IMR-90 (cell line): ENCODE measurements at regions of chr1 and their contacts with region 1.

Region 1: GRCh38 chr1:3069491-3070303 is 694 bp downstream of the PRDM16 start:
- DNase-seq: peak; percentile 19
- ATAC-seq: peak; percentile 77
- H3K4me3 ChIP-seq: peak overlapping the region; percentile 48
- H3K27ac ChIP-seq: no peak overlapping the region
- H3K4me1 ChIP-seq: peaks cover 2% of the 10 kb centered on the region; the same call in 1 of the 2 replicates
- H3K27me3 ChIP-seq: peaks cover 77% of the 10 kb centered on the region
- CTCF ChIP-seq: peak; percentile 41
- POLR2A ChIP-seq: no peak
- RAD21 ChIP-seq: peak; percentile 30

Region 2: GRCh38 chr1:2443277-2444137 is 626.2 kb before region 1 on chr1:
- CTCF ChIA-PET with region 1: no interaction called
- POLR2A ChIA-PET with region 1: no interaction called
- dilution Hi-C with region 1: no loop called
- in situ Hi-C with region 1: loop called (anchors 25 kb)
- intact Hi-C with region 1: no loop called
- DNase-seq: no peak
- ATAC-seq: peak; percentile 43; the same call in 1 of the 2 replicates
- H3K4me3 ChIP-seq: peak overlapping the region; percentile 25; the same call in 1 of the 2 replicates
- H3K27ac ChIP-seq: no peak overlapping the region
- H3K4me1 ChIP-seq: peaks cover 4% of the 10 kb centered on the region; the same call in 1 of the 2 replicates
- H3K27me3 ChIP-seq: peaks cover 40% of the 10 kb centered on the region
- CTCF ChIP-seq: peak; percentile 41
- POLR2A ChIP-seq: no peak
- RAD21 ChIP-seq: peak; percentile 51

Region 3: GRCh38 chr1:2474933-2475371 is 594.7 kb before region 1 on chr1:
- CTCF ChIA-PET with region 1: no interaction called
- POLR2A ChIA-PET with region 1: no interaction called
- dilution Hi-C with region 1: no loop called
- in situ Hi-C with region 1: no loop called
- intact Hi-C with region 1: no loop called
- DNase-seq: no peak
- ATAC-seq: no peak
- H3K4me3 ChIP-seq: no peak overlapping the region
- H3K27ac ChIP-seq: no peak overlapping the region
- H3K4me1 ChIP-seq: no peaks in the 10 kb centered on the region
- H3K27me3 ChIP-seq: peaks cover 36% of the 10 kb centered on the region
- CTCF ChIP-seq: no peak
- POLR2A ChIP-seq: no peak
- RAD21 ChIP-seq: no peak

Region 4: GRCh38 chr1:2894381-2895041 is 175.2 kb before region 1 on chr1:
- CTCF ChIA-PET with region 1: no interaction called
- POLR2A ChIA-PET with region 1: no interaction called
- dilution Hi-C with region 1: no loop called
- in situ Hi-C with region 1: no loop called
- intact Hi-C with region 1: no loop called
- DNase-seq: no peak
- ATAC-seq: no peak
- H3K4me3 ChIP-seq: no peak overlapping the region
- H3K27ac ChIP-seq: no peak overlapping the region
- H3K4me1 ChIP-seq: no peaks in the 10 kb centered on the region
- H3K27me3 ChIP-seq: no peaks in the 10 kb centered on the region
- CTCF ChIP-seq: no peak
- POLR2A ChIP-seq: no peak
- RAD21 ChIP-seq: no peak

Region 5: GRCh38 chr1:3319874-3320245 is 250.2 kb after region 1 on chr1:
- CTCF ChIA-PET with region 1: no interaction called
- POLR2A ChIA-PET with region 1: no interaction called
- dilution Hi-C with region 1: no loop called
- in situ Hi-C with region 1: no loop called
- intact Hi-C with region 1: loop called (anchors 10 kb)
- DNase-seq: peak; percentile 49
- ATAC-seq: peak; percentile 83
- H3K4me3 ChIP-seq: no peak overlapping the region
- H3K27ac ChIP-seq: no peak overlapping the region
- H3K4me1 ChIP-seq: no peaks in the 10 kb centered on the region; the same call in 1 of the 2 replicates
- H3K27me3 ChIP-seq: peaks cover 2% of the 10 kb centered on the region; the same call in 1 of the 2 replicates
- CTCF ChIP-seq: peak; percentile 68
- POLR2A ChIP-seq: no peak
- RAD21 ChIP-seq: peak; percentile 75

Region 6: GRCh38 chr1:3423245-3423829 is 353.6 kb after region 1 on chr1:
- CTCF ChIA-PET with region 1: no interaction called
- POLR2A ChIA-PET with region 1: no interaction called
- dilution Hi-C with region 1: no loop called
- in situ Hi-C with region 1: no loop called
- intact Hi-C with region 1: loop called (anchors 1 kb)
- DNase-seq: no peak
- ATAC-seq: no peak
- H3K4me3 ChIP-seq: no peak overlapping the region
- H3K27ac ChIP-seq: no peak overlapping the region
- H3K4me1 ChIP-seq: no peaks in the 10 kb centered on the region
- H3K27me3 ChIP-seq: peaks cover 9% of the 10 kb centered on the region; the same call in 1 of the 2 replicates
- CTCF ChIP-seq: no peak
- POLR2A ChIP-seq: no peak
- RAD21 ChIP-seq: no peak